ENCODE measurements at regions of chr16 and their contacts with region 1.

Region 1: GRCh38 chr16:56041686-56042085 is 149.6 kb upstream of the GNAO1 start:
- DNase-seq: no peak
- H3K4me3 ChIP-seq: no peak overlapping the region
- H3K27ac ChIP-seq: no peak overlapping the region
- H3K4me1 ChIP-seq: no peaks in the 10 kb centered on the region
- H3K27me3 ChIP-seq: no peaks in the 10 kb centered on the region
- CTCF ChIP-seq: no peak

Region 2: DNA sequence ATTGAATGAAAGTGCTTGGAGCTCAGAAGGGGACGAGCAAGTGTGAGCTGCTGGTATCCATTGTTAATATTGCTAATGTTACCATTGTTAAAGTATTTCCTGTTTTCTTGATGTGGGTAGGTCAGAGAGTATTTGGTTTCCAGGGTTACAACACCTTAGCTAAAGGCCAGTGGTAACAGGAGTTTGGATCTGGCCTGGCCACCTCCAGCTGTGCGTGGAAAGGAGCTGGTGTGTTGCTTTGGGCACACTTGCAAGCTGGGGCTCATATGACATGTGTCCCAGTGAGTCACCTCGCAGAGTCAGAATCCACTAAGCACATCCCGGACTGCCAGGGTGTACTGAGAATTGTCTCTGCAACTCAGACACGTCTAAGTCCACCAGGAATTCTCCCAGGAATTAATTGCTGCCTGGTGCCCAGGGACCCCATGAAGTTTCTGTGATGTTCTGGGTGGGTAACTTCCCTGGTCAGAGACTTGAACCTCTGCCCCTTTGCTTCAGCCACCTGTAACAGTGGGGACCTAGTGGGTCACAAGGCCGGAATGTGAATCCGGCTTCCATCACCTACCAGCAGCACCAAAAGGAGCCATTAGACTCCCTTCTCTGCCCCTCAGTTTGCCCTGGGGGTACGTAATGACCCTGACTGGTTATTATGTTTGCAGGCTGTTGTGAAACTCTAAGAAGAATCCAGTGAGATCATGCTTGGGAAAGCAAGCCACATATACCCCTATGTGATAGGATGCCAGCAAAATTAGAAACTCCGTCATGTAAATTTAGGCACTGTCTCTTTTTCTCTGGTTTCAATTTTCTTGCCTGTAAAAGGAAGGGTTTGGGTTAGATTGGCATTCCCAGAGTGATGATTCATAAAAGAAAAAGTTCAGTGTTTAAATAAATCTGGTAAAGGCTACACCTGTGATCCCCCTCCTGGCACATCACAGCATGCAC is 373.1 kb before region 1 on chr16:
- intact Hi-C with region 1: no loop called
- DNase-seq: no peak
- H3K4me3 ChIP-seq: no peak overlapping the region
- H3K27ac ChIP-seq: no peak overlapping the region
- H3K4me1 ChIP-seq: no peaks in the 10 kb centered on the region
- H3K27me3 ChIP-seq: no peaks in the 10 kb centered on the region
- CTCF ChIP-seq: no peak

Region 3: GRCh38 chr16:56324406-56324805 is 282.7 kb after region 1 on chr16:
- intact Hi-C with region 1: loop called (anchors 10 kb)
- DNase-seq: no peak
- H3K4me3 ChIP-seq: no peak overlapping the region
- H3K27ac ChIP-seq: no peak overlapping the region
- H3K4me1 ChIP-seq: no peaks in the 10 kb centered on the region
- H3K27me3 ChIP-seq: no peaks in the 10 kb centered on the region
- CTCF ChIP-seq: no peak

Measured in colonic mucosa (tissue), 4 donors.